CD14-positive monocyte (primary cell): ENCODE measurements at regions of chr4 and their contacts with region 1.

Region 1: DNA sequence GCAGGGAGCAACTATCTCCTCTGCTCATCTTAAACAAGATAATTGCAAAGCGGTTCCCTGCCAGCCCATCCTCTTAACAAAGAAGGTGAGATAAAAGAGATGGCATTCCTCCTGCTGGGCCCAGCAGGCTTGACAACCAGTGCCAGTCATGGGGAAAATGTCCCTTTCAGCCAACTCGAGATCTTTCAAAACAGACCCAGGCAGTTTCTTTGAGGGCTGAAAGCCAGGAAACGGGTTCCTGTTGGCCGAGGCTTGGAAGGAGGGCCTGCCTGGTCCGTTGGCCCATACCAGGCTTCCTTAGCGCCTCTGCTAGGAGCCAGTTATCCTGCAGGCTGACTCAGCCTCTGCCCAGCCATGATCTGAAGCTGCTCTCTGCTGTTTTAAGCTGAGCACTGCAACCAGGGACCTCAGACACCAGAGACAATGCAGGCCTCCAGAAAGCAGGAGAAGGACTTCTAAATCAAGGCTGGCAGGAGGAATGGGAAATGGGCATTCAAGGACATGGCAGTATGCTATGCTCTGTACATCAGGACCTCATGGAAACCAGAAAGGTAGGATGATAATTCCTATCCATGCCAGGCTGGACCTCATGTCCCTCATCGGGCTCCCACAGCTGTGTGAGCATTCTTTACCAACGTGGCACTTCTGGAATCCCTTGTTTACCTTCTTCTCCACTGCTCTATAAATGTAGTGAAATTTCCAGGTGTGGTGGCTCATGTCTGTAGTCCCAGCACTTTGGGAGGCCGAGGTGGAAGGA is 42.4 kb upstream of the SLC2A9 start:
- DNase-seq: peak; percentile 70 to 82 (median 81)
- H3K4me3 ChIP-seq: no peak overlapping the region
- H3K4me3 Mint-ChIP-seq: peak overlapping the region in 1 of 2 donors; percentile 47
- H3K27ac ChIP-seq: peak overlapping the region; percentile 50 to 71
- H3K27ac Mint-ChIP-seq: peak overlapping the region; percentile 77 to 89 (median 81)
- H3K4me1 ChIP-seq: peaks cover 34 to 37% of the 10 kb centered on the region in 2 donors
- H3K4me1 Mint-ChIP-seq: peaks cover 36% of the 10 kb centered on the region
- H3K27me3 ChIP-seq: no peaks in the 10 kb centered on the region
- H3K27me3 Mint-ChIP-seq: peaks cover 0 to 1% (median 0%) of the 10 kb centered on the region in 3 donors
- CTCF ChIP-seq: peak; percentile 84

Region 2: GRCh38 chr4:9704551-9705332 is 359.0 kb before region 1 on chr4:
- intact Hi-C with region 1: loop called in 1 of 2 experiments (anchors 10 kb)
- DNase-seq: no peak
- H3K4me3 ChIP-seq: no peak overlapping the region
- H3K4me3 Mint-ChIP-seq: no peak overlapping the region
- H3K27ac ChIP-seq: no peak overlapping the region
- H3K27ac Mint-ChIP-seq: no peak overlapping the region
- H3K4me1 ChIP-seq: no peaks in the 10 kb centered on the region
- H3K4me1 Mint-ChIP-seq: peaks cover 6% of the 10 kb centered on the region
- H3K27me3 ChIP-seq: no peaks in the 10 kb centered on the region
- H3K27me3 Mint-ChIP-seq: peaks cover 6 to 13% (median 9%) of the 10 kb centered on the region in 3 donors
- CTCF ChIP-seq: no peak

Region 3: DNA sequence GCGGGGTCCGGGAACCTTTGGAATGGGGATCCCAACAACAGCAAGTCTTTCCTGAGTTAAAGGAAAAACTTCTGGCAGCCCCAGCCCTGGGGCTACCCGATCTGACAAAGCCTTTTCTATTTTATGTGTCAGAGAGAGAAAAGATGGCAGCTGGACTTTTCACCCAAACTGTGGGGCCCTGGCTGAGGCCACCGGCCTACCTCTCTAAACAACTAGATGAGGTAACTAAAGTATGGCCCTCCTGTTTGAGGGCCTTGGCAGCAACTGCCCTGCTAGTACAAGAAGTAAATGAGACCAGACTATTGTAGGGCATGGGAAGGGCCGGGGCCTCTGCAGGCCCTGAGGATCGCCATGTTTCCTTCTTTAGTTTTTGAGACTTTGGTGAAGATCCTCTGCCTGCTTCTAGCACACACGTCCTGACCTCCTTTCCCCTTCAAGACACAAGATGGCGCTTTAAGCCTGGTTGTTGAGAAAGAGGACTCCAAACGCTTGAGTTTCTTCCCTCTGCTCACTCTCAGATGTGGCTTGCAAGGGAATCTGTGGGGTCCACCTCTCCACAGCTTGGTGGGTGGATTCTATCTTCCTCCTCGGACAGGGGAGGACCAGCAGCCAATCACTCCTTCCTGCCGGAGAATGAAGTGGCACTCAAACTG is 300.8 kb before region 1 on chr4:
- intact Hi-C with region 1: loop called (anchors 2 to 5 kb)
- DNase-seq: peak; percentile 42 to 65 (median 56)
- H3K4me3 ChIP-seq: no peak overlapping the region
- H3K4me3 Mint-ChIP-seq: no peak overlapping the region
- H3K27ac ChIP-seq: no peak overlapping the region
- H3K27ac Mint-ChIP-seq: peak overlapping the region in 1 of 7 donors; percentile 5
- H3K4me1 ChIP-seq: peaks cover 3% of the 10 kb centered on the region in 2 donors
- H3K4me1 Mint-ChIP-seq: peaks cover 6% of the 10 kb centered on the region
- H3K27me3 ChIP-seq: no peaks in the 10 kb centered on the region
- H3K27me3 Mint-ChIP-seq: peaks cover 0 to 13% (median 8%) of the 10 kb centered on the region in 3 donors
- CTCF ChIP-seq: peak; percentile 65

Region 4: DNA sequence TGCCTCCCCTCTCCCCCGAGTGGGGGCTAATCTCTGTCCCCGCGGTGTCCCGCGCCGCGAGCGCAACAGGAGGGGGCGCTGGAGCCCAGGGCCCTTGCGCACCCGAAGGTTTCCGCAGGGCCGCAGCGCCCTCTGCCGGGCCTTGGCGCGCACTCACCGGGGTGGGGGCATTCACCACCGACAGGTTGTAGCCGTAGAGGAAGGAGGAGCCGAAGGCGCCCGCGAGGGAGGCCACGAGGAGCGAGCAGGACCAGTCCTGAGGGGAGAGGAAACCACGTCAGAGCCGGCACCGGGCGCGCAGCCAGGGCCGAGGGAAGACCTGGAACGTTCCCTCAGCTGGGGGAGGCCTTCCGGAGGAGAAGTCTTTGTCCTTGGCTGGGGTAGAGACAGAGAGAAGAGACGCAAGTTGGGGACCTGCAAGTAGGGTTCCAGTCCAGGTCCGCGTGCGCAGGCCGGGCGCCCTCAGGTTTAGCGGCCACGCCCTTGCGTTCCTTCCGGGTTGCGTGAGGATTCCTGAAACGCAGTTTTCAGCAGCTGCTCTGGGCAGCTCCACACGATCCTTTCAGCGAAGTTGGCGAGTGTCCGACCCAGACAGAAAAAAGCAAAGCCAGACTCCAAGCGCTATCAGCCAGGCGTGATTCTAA is 44.8 kb before region 1 on chr4:
- intact Hi-C with region 1: loop called (anchors 1 to 5 kb)
- DNase-seq: peak; percentile 96 to 97 (median 96)
- H3K4me3 ChIP-seq: peak overlapping the region; percentile 13 to 69 (median 51)
- H3K4me3 Mint-ChIP-seq: peak overlapping the region; percentile 78 to 92
- H3K27ac ChIP-seq: peak overlapping the region; percentile 95
- H3K27ac Mint-ChIP-seq: peak overlapping the region; percentile 96 to 99 (median 97)
- H3K4me1 ChIP-seq: peaks cover 58 to 63% of the 10 kb centered on the region in 2 donors
- H3K4me1 Mint-ChIP-seq: peaks cover 69% of the 10 kb centered on the region
- H3K27me3 ChIP-seq: no peaks in the 10 kb centered on the region
- H3K27me3 Mint-ChIP-seq: no peaks in the 10 kb centered on the region
- CTCF ChIP-seq: peak; percentile 100